Activated naive CD4-positive, alpha-beta T cell treated with anti-CD3 and anti-CD28 coated beads for 36 hours (primary cell): ENCODE measurements at regions of chr11 and their contacts with region 1.

Region 1: GRCh38 chr11:43868852-43869567 is 11.6 kb upstream of the ALKBH3 start:
- DNase-seq: peak; percentile 70
- H3K4me3 Mint-ChIP-seq: no peak overlapping the region
- H3K27ac Mint-ChIP-seq: peak overlapping the region; percentile 28
- H3K4me1 Mint-ChIP-seq: peaks cover 24% of the 10 kb centered on the region
- H3K27me3 Mint-ChIP-seq: peaks cover 46% of the 10 kb centered on the region

Region 2: GRCh38 chr11:43358801-43359421 is 510.1 kb before region 1 on chr11 and contains the start of gene TTC17:
- CTCF ChIA-PET with region 1: no interaction called
- intact Hi-C with region 1: loop called (anchors 5 kb)
- DNase-seq: peak; percentile 96
- H3K4me3 Mint-ChIP-seq: peak within 1 kb of the TSS; percentile 95
- H3K27ac Mint-ChIP-seq: peak within 1 kb of the TSS; percentile 94
- H3K4me1 Mint-ChIP-seq: peaks cover 37% of the 10 kb centered on the region
- H3K27me3 Mint-ChIP-seq: no peaks in the 10 kb centered on the region
- total RNA-seq, gene TTC17: 57.1 to 64.3 TPM

Region 3: DNA sequence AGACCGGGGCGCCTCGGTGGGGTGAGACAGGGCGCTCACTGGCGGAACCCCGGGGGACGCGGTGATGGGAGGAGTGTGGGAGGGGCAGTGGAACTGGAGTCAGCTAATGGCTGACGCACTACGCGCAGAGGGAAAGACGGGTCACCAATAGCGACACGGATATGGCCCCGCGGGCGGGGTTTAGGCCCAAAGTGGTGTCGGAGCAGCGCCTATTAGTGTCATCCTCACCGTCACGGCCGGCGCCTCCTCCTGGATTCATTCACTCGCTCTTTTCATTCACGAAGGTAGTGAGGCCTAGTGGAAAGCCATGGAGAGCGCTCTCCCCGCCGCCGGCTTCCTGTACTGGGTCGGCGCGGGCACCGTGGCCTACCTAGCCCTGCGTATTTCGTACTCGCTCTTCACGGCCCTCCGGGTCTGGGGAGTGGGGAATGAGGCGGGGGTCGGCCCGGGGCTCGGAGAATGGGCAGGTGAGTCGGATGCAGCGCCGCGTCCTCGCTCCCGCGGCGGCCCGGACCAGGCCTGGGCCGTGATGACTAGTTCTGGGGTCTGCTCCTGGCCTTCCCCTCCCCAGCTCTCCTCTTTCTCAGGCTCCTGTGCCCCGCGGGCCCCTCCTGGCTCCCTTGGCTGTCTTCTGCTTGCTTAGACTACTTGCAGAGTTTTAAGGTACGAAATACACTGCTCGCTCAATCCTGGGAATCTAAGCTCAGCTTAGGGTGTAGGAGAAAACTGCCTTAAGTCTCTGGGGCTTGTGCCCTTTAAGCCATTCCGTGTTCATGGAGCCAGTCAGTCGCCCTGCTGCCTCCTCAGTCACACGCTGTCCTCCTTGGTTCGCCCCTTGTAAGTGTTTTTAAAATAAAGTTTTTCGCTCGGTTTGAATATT is 188.2 kb before region 1 on chr11 and contains the start of gene HSD17B12:
- CTCF ChIA-PET with region 1: no interaction called
- intact Hi-C with region 1: loop called (anchors 1 kb)
- DNase-seq: peak; percentile 99
- H3K4me3 Mint-ChIP-seq: peak within 1 kb of the TSS; percentile 91
- H3K27ac Mint-ChIP-seq: peak within 1 kb of the TSS; percentile 89
- H3K4me1 Mint-ChIP-seq: peaks cover 31% of the 10 kb centered on the region
- H3K27me3 Mint-ChIP-seq: no peaks in the 10 kb centered on the region
- total RNA-seq, gene HSD17B12: 31.7 to 33.8 TPM

Region 4: GRCh38 chr11:43880640-43881159 is 11.7 kb after region 1 on chr11 and contains the start of gene ALKBH3:
- CTCF ChIA-PET with region 1: interaction called, 3 read pairs
- intact Hi-C with region 1: loop called (anchors 1 kb)
- DNase-seq: peak; percentile 94
- H3K4me3 Mint-ChIP-seq: peak within 1 kb of the TSS; percentile 81
- H3K27ac Mint-ChIP-seq: peak within 1 kb of the TSS; percentile 68
- H3K4me1 Mint-ChIP-seq: peaks cover 32% of the 10 kb centered on the region
- H3K27me3 Mint-ChIP-seq: no peaks in the 10 kb centered on the region
- total RNA-seq, gene ALKBH3: 33.5 to 36.6 TPM

Region 5: DNA sequence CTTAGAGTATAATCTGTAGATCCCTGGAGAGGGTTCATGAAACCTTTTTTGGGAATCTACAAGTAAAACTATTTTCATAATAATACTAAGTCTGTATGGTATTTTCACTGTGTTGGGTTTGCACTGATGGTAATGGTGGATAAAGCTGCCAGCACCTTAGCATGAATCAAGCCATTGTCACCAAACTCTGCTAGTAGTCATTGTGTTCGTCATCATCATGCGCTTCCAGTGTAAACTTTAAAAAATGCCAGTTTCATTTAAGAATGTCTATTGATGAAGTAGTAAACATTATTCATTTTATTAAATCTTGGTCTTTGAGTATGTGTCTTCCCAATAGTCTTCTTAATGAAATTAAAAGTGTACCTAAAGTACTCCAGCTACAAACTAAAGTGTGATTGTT is 26.6 kb after region 1 on chr11:
- CTCF ChIA-PET with region 1: no interaction called
- intact Hi-C with region 1: no loop called
- DNase-seq: no peak
- H3K4me3 Mint-ChIP-seq: no peak overlapping the region
- H3K27ac Mint-ChIP-seq: no peak overlapping the region
- H3K4me1 Mint-ChIP-seq: no peaks in the 10 kb centered on the region
- H3K27me3 Mint-ChIP-seq: no peaks in the 10 kb centered on the region

Region 6: GRCh38 chr11:43905813-43906241 is 36.8 kb after region 1 on chr11:
- CTCF ChIA-PET with region 1: no interaction called
- intact Hi-C with region 1: no loop called
- DNase-seq: no peak
- H3K4me3 Mint-ChIP-seq: no peak overlapping the region
- H3K27ac Mint-ChIP-seq: no peak overlapping the region
- H3K4me1 Mint-ChIP-seq: peaks cover 10% of the 10 kb centered on the region
- H3K27me3 Mint-ChIP-seq: no peaks in the 10 kb centered on the region

Region 7: DNA sequence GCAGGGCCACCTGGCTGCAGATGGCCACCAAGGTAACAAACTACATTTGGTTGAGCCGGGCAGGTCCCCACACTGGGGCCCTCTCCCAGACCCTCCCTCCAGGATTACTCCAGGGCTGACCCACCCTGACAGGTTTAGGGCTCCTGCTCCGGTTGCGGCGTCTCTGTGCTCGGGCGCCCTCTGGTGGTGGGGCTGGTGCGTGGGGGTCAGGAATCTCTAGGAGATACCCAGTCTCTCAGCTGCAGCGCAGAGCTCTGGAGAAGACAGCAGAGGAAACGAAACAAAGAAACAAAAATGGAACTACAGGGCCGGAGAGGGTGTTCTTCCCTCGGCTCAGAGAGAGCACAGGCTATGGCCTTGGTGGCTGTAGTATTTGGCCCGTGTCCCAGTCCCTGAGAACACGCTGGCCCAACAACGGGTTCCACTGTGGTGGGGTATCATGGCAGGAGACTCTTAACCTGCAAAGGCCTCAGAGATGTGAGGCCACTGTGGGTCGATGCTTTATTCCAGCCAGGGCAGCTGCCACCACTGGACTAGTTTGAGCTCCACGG is 75.8 kb after region 1 on chr11:
- CTCF ChIA-PET with region 1: no interaction called
- intact Hi-C with region 1: loop called (anchors 1 kb)
- DNase-seq: peak; percentile 83
- H3K4me3 Mint-ChIP-seq: peak overlapping the region; percentile 17
- H3K27ac Mint-ChIP-seq: no peak overlapping the region
- H3K4me1 Mint-ChIP-seq: peaks cover 15% of the 10 kb centered on the region
- H3K27me3 Mint-ChIP-seq: peaks cover 54% of the 10 kb centered on the region

Region 8: GRCh38 chr11:44475114-44475686 is 606.2 kb after region 1 on chr11:
- CTCF ChIA-PET with region 1: no interaction called
- intact Hi-C with region 1: no loop called
- DNase-seq: no peak
- H3K4me3 Mint-ChIP-seq: no peak overlapping the region
- H3K27ac Mint-ChIP-seq: no peak overlapping the region
- H3K4me1 Mint-ChIP-seq: no peaks in the 10 kb centered on the region
- H3K27me3 Mint-ChIP-seq: peaks cover 7% of the 10 kb centered on the region

Region 9: GRCh38 chr11:44498089-44498871 is 629.3 kb after region 1 on chr11:
- CTCF ChIA-PET with region 1: no interaction called
- intact Hi-C with region 1: no loop called
- DNase-seq: no peak
- H3K4me3 Mint-ChIP-seq: no peak overlapping the region
- H3K27ac Mint-ChIP-seq: no peak overlapping the region
- H3K4me1 Mint-ChIP-seq: no peaks in the 10 kb centered on the region
- H3K27me3 Mint-ChIP-seq: peaks cover 2% of the 10 kb centered on the region

Region 10: DNA sequence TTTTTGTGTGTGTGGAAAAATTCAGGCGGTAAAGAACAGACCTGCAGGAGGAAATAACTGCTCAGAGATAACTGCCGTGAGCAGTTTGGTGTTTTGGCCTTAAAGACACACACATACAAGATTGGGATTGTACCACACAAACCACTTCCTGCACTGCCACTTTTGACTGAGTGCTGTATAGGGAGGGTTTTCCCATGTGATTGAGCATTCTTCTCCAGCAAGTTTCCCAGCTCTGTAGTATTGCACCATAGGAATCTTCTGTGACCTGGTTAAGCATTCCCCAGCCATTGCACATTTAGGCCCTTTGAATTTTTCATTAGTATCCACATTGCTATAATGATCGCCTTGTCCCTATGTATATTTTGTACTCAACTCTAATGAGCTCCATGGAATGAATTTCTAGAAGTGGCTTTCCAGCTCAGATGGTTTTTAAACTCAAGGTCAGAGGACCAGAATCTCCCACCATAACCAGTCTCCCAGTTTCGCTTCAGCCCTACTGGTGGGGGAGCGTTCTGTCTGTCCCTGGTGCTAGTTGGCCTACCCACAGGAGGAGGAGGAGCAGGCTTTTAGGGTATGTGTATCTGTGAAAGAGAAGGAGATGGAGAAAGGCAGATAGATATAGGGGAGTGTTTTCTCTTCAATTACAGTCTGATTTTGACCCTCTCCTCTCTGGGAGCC is 705.7 kb after region 1 on chr11:
- CTCF ChIA-PET with region 1: no interaction called
- intact Hi-C with region 1: loop called (anchors 2 kb)
- DNase-seq: peak; percentile 84
- H3K4me3 Mint-ChIP-seq: peak overlapping the region; percentile 68
- H3K27ac Mint-ChIP-seq: peak overlapping the region; percentile 96
- H3K4me1 Mint-ChIP-seq: peaks cover 93% of the 10 kb centered on the region
- H3K27me3 Mint-ChIP-seq: no peaks in the 10 kb centered on the region